Heart left ventricle (tissue), 16 donors: ENCODE measurements at regions of chr21 and their contacts with region 1.

Region 1: DNA sequence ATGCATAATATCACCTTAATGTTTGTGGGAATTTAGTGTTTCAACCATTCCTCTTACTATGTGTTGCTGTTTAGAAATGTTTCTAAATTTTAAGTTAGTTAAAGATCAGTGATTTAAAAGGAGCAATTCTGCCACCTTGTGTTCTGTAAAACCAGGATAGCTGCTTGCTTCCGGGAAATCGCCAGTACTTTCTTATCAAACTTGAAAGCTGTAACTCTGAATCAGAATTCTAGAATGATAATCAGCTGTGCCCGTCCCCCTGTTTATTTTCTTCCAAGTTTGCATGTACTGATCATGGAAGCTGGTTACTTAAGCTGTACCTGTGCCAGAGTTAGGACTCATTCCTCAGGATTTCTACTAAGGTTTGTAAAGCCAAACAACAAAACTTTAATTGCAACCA is 656.4 kb downstream of the LTN1 start:
- DNase-seq: peak in 1 of 5 donors; percentile 18
- ATAC-seq: peak in 3 of 4 donors; percentile 34 to 55 (median 38)
- H3K4me3 ChIP-seq: no peak overlapping the region
- H3K27ac ChIP-seq: peak overlapping the region in 2 of 12 donors; percentile 26 to 34
- H3K4me1 ChIP-seq: peaks cover 0 to 36% (median 8%) of the 10 kb centered on the region in 12 donors
- H3K27me3 ChIP-seq: no peaks in the 10 kb centered on the region
- CTCF ChIP-seq: peak; percentile 19 to 74 (median 57)
- POLR2A ChIP-seq: no peak

Region 2: GRCh38 chr21:26850108-26850643 is 1486.1 kb before region 1 on chr21:
- intact Hi-C with region 1: loop called (anchors 1 to 10 kb)
- DNase-seq: no peak
- ATAC-seq: no peak
- H3K4me3 ChIP-seq: peak overlapping the region in 6 of 12 donors; percentile 3 to 40 (median 8)
- H3K27ac ChIP-seq: no peak overlapping the region
- H3K4me1 ChIP-seq: peaks cover 0 to 19% (median 5%) of the 10 kb centered on the region in 12 donors
- H3K27me3 ChIP-seq: peaks cover 0 to 14% (median 0%) of the 10 kb centered on the region in 9 donors
- CTCF ChIP-seq: peak; percentile 44 to 86 (median 72)
- POLR2A ChIP-seq: no peak

Region 3: GRCh38 chr21:27570306-27570868 is 765.9 kb before region 1 on chr21:
- intact Hi-C with region 1: loop called in 1 of 10 experiments (anchors 5 kb)
- DNase-seq: peak; percentile 55 to 82 (median 69)
- ATAC-seq: peak; percentile 80 to 94 (median 89)
- H3K4me3 ChIP-seq: no peak overlapping the region
- H3K27ac ChIP-seq: peak overlapping the region in 9 of 12 donors; percentile 2 to 62 (median 33)
- H3K4me1 ChIP-seq: peaks cover 0 to 19% (median 0%) of the 10 kb centered on the region in 12 donors
- H3K27me3 ChIP-seq: no peaks in the 10 kb centered on the region
- CTCF ChIP-seq: no peak
- POLR2A ChIP-seq: no peak

Region 4: GRCh38 chr21:27759091-27759659 is 577.1 kb before region 1 on chr21:
- intact Hi-C with region 1: loop called in 8 of 10 experiments (anchors 5 to 10 kb)
- DNase-seq: peak in 4 of 5 donors; percentile 23 to 60 (median 43)
- ATAC-seq: peak; percentile 61 to 86 (median 72)
- H3K4me3 ChIP-seq: no peak overlapping the region
- H3K27ac ChIP-seq: no peak overlapping the region
- H3K4me1 ChIP-seq: peaks cover 0 to 16% (median 0%) of the 10 kb centered on the region in 12 donors
- H3K27me3 ChIP-seq: no peaks in the 10 kb centered on the region
- CTCF ChIP-seq: peak; percentile 16 to 64 (median 46)
- POLR2A ChIP-seq: no peak

Region 5: GRCh38 chr21:28069450-28069923 is 266.8 kb before region 1 on chr21:
- intact Hi-C with region 1: loop called in 2 of 10 experiments (anchors 5 to 10 kb)
- DNase-seq: no peak
- ATAC-seq: no peak
- H3K4me3 ChIP-seq: no peak overlapping the region
- H3K27ac ChIP-seq: no peak overlapping the region
- H3K4me1 ChIP-seq: peaks cover 0 to 41% (median 13%) of the 10 kb centered on the region in 12 donors
- H3K27me3 ChIP-seq: no peaks in the 10 kb centered on the region
- CTCF ChIP-seq: no peak
- POLR2A ChIP-seq: no peak